Dendritic cell treated with granulocyte-macrophage colony-stimulating factor and Interleukin-4, amounts not matched to agents 40 ng/mL and 50 ng/mL, for 4 days (primary cell): ENCODE measurements at regions of chr1 and their contacts with region 1.

Region 1: GRCh38 chr1:110412576-110412975 is 5.1 kb upstream of the LAMTOR5 start:
- H3K4me3 Mint-ChIP-seq: no peak overlapping the region
- H3K27ac Mint-ChIP-seq: peak overlapping the region; percentile 58
- H3K4me1 Mint-ChIP-seq: peaks cover 28% of the 10 kb centered on the region
- H3K27me3 Mint-ChIP-seq: no peaks in the 10 kb centered on the region

Region 2: DNA sequence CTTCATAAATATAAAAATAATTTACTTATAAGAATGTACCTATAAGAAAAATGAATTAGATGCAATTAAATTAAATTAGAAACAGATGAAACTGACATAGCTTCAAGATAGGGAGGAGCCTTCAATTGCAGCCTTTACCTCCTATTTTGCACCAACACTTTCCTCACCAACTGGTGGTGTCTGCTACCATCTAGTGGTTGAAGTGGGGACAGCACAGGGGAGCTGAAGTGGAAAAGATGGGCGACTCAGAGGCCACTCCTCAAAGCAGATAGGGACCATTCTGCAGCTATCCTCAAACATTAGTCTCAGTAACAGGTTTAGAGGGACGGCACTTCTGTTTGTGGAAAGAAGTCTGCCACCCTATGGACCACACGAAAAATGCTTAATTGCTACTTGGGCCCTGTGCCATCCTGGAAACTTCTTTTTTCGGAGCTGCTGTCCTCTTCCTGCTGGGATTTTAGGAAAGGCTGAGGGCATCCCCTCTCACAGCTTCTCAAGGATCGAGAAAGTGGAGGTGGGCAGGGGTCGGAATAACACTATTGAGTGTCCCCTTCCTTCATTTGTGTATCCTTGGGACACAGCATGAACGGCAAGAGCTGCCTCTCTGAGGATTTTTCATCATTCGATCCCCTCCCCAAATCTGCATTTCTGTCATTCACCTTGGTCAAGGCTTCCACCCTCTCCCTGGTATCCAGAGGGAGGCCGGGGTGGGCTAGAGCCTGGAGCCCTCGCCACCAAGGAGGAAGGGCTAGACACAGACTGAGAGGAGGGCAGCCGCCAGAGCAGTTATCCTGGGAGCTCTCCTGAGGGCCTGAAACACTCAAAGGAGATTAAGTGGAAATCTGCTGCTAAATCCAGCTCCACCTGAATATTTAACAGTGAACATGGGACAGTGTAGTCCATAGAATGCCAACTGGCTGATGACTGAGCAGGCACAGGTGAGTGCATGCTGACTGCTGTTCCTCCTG is 48.0 kb after region 1 on chr1:
- intact Hi-C with region 1: loop called (anchors 1 kb)
- H3K4me3 Mint-ChIP-seq: no peak overlapping the region
- H3K27ac Mint-ChIP-seq: no peak overlapping the region
- H3K4me1 Mint-ChIP-seq: no peaks in the 10 kb centered on the region
- H3K27me3 Mint-ChIP-seq: no peaks in the 10 kb centered on the region